Vagina (tissue), 2 donors: ENCODE measurements at regions of chr6 and their contacts with region 1.

Region 1: GRCh38 chr6:30828027-30828960 is 56.0 kb upstream of the DDR1 start:
- DNase-seq: peak in 1 of 2 donors; percentile 95
- H3K4me3 ChIP-seq: peak overlapping the region in 1 of 2 donors; percentile 10
- H3K27ac ChIP-seq: peak overlapping the region; percentile 73
- H3K4me1 ChIP-seq: peaks cover 25% of the 10 kb centered on the region
- H3K27me3 ChIP-seq: no peaks in the 10 kb centered on the region
- CTCF ChIP-seq: peak; percentile 73 to 93 (median 89)
- POLR2A ChIP-seq: no peak

Region 2: DNA sequence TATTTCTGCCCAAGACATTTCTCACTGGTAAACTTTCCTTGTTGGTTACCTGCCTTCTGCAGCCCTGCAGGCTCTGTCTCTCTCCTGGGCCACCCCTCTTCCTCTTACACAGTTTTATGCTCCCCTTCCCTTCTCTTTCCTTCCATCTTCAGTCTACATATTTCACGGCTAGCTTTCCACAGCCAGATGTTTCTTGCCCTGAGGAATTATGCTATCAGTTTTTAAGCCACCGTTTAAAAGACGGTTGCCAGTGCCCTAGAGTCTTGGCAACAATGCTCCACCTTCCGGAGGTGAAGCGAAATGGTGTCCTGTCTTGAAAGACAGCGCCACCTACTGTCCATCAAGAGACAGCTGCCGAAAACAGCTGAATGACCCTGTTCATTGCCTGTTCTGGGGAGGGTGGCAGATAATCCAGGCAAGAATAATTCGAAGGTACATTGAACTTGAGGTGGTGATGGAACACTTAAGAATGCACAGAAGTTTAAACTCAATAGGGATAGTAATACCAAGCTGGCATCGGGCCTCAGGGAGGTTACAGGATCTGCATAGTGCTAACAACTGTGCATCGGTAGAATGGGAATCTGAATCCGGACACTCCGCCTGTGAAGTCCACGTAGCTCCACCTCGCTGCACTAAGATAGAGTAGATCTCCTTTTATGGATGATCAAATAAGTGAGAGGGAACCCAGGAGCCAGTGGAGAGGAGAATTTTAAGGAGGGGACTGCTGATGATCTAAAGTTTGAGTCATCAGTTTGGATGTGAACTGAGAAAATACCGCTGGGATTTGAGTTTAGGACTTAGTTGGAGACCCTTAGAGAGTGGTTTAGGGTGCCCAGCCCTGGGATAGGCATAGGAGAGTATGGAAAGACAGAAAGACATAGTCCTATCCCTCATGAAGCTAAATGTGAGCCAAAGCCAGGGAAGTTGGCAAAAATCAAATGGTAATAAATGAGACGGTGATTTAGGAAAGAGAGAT is 697.1 kb before region 1 on chr6:
- intact Hi-C with region 1: no loop called
- DNase-seq: no peak
- H3K4me3 ChIP-seq: no peak overlapping the region
- H3K27ac ChIP-seq: no peak overlapping the region
- H3K4me1 ChIP-seq: peaks cover 12% of the 10 kb centered on the region
- H3K27me3 ChIP-seq: peaks cover 5% of the 10 kb centered on the region
- CTCF ChIP-seq: peak; percentile 77 to 90 (median 82)
- POLR2A ChIP-seq: no peak

Region 3: GRCh38 chr6:30572148-30572547 is 256.1 kb before region 1 on chr6:
- intact Hi-C with region 1: no loop called
- DNase-seq: no peak
- H3K4me3 ChIP-seq: peak overlapping the region; percentile 54 to 75
- H3K27ac ChIP-seq: peak overlapping the region; percentile 91
- H3K4me1 ChIP-seq: peaks cover 48% of the 10 kb centered on the region
- H3K27me3 ChIP-seq: no peaks in the 10 kb centered on the region
- CTCF ChIP-seq: no peak
- POLR2A ChIP-seq: no peak

Region 4: DNA sequence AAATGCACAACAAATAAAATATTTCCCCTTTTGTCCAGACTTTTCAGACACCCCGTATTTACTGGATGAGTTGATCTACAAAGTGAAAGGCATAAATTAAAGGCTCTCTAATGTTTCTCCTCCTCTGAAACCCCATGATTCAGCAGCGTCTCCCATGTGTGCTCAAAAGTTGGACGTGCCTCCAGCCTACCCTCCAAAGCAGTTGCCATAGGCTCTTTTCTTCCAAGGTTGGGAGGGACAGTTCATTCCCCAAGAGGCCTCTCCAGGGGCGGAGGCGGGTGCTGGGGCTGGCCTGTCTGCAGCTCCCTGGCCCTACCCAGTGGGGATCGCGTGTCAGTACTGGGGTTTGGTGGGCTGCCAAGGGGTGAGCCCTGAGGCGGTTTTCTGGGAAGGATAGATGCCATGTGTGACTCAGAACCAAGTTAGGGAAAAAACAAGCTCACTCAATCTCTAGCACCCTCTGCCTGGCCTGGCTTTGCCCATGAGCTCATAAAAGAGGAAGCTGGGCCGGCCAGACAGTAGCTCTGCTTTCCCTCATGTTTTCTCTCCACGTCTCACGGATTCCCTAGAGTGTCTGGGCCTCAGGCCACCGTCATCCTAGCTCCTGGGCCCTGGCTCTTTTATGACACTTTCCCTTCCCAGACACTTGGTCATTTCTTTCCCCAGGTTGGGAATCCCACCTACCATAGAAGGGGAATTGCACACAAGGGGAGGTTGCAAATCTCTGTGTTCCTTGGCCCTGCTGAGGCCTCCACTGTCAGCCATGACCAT is 76.0 kb before region 1 on chr6:
- intact Hi-C with region 1: loop called (anchors 10 kb)
- DNase-seq: peak; percentile 96 to 97
- H3K4me3 ChIP-seq: no peak overlapping the region
- H3K27ac ChIP-seq: peak overlapping the region; percentile 84
- H3K4me1 ChIP-seq: peaks cover 59% of the 10 kb centered on the region
- H3K27me3 ChIP-seq: no peaks in the 10 kb centered on the region
- CTCF ChIP-seq: no peak
- POLR2A ChIP-seq: no peak

Region 5: DNA sequence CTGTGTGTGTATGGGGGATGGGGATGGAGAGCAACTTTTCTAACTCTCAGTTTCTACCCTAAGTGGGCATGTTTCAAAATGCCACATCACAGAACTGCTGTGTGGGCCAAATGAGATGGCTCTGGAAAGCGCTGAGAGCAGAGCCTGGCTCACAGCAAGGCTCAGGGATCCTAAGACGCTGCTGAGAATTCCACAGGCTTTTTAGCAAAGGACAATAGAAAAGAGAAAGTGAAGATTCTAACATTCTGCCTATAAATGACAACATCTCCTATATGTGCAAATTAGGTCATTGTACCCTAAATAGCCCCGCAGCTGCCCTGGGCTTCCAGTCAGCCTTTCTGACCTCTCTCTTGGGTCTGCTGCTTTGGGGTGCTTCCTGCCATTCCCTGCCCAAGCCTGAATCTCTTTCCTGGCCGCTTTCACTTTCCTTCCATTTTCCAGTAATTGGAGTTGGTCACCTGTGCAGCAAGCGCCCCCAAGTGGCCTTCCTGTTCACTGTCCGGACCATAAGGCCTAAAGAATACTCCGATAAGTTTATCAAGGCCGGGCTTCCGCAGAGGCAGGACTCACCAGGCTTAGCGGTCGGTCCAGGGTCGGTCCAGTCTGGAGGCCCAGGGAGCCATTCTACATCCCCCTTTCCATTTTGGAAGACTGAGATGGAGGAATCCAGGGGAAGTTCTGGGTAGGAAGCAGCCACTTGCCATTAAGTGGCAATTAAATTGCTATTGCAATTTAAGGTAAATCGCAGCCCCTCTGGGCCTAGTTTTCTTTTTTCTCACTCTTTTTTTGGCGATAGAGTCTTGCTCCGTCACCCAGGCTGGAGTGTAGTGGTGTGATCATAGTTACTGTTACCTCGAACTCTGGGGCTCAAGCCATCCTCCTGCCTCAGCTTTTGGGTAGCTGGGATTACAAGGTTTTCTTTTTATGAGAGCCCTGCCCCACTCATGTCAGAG is 49.4 kb after region 1 on chr6:
- intact Hi-C with region 1: loop called (anchors 2 kb)
- DNase-seq: no peak
- H3K4me3 ChIP-seq: peak overlapping the region; percentile 27 to 34
- H3K27ac ChIP-seq: peak overlapping the region; percentile 89
- H3K4me1 ChIP-seq: peaks cover 54% of the 10 kb centered on the region
- H3K27me3 ChIP-seq: no peaks in the 10 kb centered on the region
- CTCF ChIP-seq: peak; percentile 78 to 94 (median 80)
- POLR2A ChIP-seq: no peak

Region 6: GRCh38 chr6:30883685-30884520 is 55.6 kb after region 1 on chr6 and contains the start of gene DDR1:
- intact Hi-C with region 1: loop called (anchors 2 kb)
- DNase-seq: peak in 1 of 2 donors; percentile 96
- H3K4me3 ChIP-seq: peak within 1 kb of the TSS; percentile 61 to 82
- H3K27ac ChIP-seq: peak within 1 kb of the TSS; percentile 95
- H3K4me1 ChIP-seq: peaks cover 73% of the 10 kb centered on the region
- H3K27me3 ChIP-seq: no peaks in the 10 kb centered on the region
- CTCF ChIP-seq: no peak
- POLR2A ChIP-seq: peak in 1 of 2 donors; percentile 30
- total RNA-seq, gene DDR1: 71.5 TPM

Region 7: GRCh38 chr6:30942338-30943060 is 114.2 kb after region 1 on chr6:
- intact Hi-C with region 1: no loop called
- DNase-seq: no peak
- H3K4me3 ChIP-seq: no peak overlapping the region
- H3K27ac ChIP-seq: no peak overlapping the region
- H3K4me1 ChIP-seq: peaks cover 20% of the 10 kb centered on the region
- H3K27me3 ChIP-seq: no peaks in the 10 kb centered on the region
- CTCF ChIP-seq: no peak
- POLR2A ChIP-seq: no peak

Region 8: GRCh38 chr6:31079656-31080261 is 251.5 kb after region 1 on chr6:
- intact Hi-C with region 1: loop called (anchors 5 kb)
- DNase-seq: no peak
- H3K4me3 ChIP-seq: peak overlapping the region in 1 of 2 donors; percentile 21
- H3K27ac ChIP-seq: no peak overlapping the region
- H3K4me1 ChIP-seq: no peaks in the 10 kb centered on the region
- H3K27me3 ChIP-seq: no peaks in the 10 kb centered on the region
- CTCF ChIP-seq: peak; percentile 13 to 75 (median 44)
- POLR2A ChIP-seq: no peak

Region 9: GRCh38 chr6:32413427-32414047 is 1585.2 kb after region 1 on chr6:
- intact Hi-C with region 1: no loop called
- DNase-seq: no peak
- H3K4me3 ChIP-seq: no peak overlapping the region
- H3K27ac ChIP-seq: no peak overlapping the region
- H3K4me1 ChIP-seq: no peaks in the 10 kb centered on the region
- H3K27me3 ChIP-seq: no peaks in the 10 kb centered on the region
- CTCF ChIP-seq: peak; percentile 84 to 90 (median 89)
- POLR2A ChIP-seq: no peak